ENCODE measurements at regions of chr1 and their contacts with region 1.

Region 1: GRCh38 chr1:9449106-9449627 is 90.1 kb upstream of the SLC25A33 start:
- DNase-seq: peak; percentile 67 to 86
- H3K4me3 ChIP-seq: no peak overlapping the region
- H3K4me3 Mint-ChIP-seq: peak overlapping the region; percentile 60
- H3K27ac Mint-ChIP-seq: peak overlapping the region; percentile 91
- H3K4me1 ChIP-seq: peaks cover 77% of the 10 kb centered on the region
- H3K4me1 Mint-ChIP-seq: peaks cover 47% of the 10 kb centered on the region
- H3K27me3 ChIP-seq: no peaks in the 10 kb centered on the region
- H3K27me3 Mint-ChIP-seq: no peaks in the 10 kb centered on the region
- CTCF ChIP-seq: no peak

Region 2: GRCh38 chr1:9438431-9439073 is 10.6 kb before region 1 on chr1:
- CTCF ChIA-PET with region 1: no interaction called
- POLR2A ChIA-PET with region 1: interaction called, 3 read pairs
- intact Hi-C with region 1: loop called (anchors 1 kb)
- DNase-seq: no peak
- H3K4me3 ChIP-seq: no peak overlapping the region
- H3K4me3 Mint-ChIP-seq: no peak overlapping the region
- H3K27ac Mint-ChIP-seq: peak overlapping the region; percentile 8
- H3K4me1 ChIP-seq: peaks cover 60% of the 10 kb centered on the region
- H3K4me1 Mint-ChIP-seq: peaks cover 34% of the 10 kb centered on the region
- H3K27me3 ChIP-seq: no peaks in the 10 kb centered on the region
- H3K27me3 Mint-ChIP-seq: no peaks in the 10 kb centered on the region
- CTCF ChIP-seq: no peak

Region 3: DNA sequence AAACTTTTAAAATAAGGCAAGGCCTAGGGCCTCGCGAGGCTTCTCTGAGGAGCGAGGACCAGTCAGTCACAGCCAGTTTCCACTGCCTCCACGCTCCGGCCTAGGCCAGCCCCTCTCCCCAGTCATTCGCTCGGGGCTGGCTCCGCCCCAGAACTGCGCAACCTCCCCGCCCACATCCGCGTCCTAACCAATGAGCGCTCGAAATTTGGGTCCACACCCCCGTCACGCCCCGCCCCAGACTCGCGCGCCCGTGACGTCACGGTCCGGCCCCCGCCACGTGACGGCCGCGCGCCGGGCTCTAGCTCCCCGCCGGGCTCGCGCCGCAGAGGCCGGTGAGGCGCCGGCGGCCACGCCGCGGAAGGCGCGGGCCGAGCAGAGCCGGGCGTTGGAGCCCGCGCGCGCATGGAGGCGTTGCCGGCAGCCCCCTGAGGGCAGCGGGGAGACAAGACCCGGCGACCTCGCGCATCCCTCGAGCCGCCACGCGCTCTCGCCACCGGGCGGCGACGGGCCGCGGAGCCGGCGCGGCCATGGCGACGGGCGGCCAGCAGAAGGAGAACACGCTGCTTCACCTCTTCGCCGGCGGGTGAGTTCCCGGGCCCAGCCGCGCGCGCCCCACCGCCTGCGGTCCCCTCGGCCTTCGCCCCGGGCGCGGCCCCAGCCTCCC is 90.1 kb after region 1 on chr1 and contains the start of gene SLC25A33:
- CTCF ChIA-PET with region 1: no interaction called
- POLR2A ChIA-PET with region 1: interaction called, 10 read pairs
- intact Hi-C with region 1: no loop called
- DNase-seq: peak; percentile 97 to 98
- H3K4me3 ChIP-seq: peak within 1 kb of the TSS; percentile 95
- H3K4me3 Mint-ChIP-seq: peak within 1 kb of the TSS; percentile 86
- H3K27ac Mint-ChIP-seq: peak within 1 kb of the TSS; percentile 82
- H3K4me1 ChIP-seq: peaks cover 18% of the 10 kb centered on the region
- H3K4me1 Mint-ChIP-seq: peaks cover 12% of the 10 kb centered on the region
- H3K27me3 ChIP-seq: no peaks in the 10 kb centered on the region
- H3K27me3 Mint-ChIP-seq: no peaks in the 10 kb centered on the region
- CTCF ChIP-seq: no peak
- total RNA-seq, gene SLC25A33: 9.9 and 11.2 TPM in 2 replicates

Region 4: DNA sequence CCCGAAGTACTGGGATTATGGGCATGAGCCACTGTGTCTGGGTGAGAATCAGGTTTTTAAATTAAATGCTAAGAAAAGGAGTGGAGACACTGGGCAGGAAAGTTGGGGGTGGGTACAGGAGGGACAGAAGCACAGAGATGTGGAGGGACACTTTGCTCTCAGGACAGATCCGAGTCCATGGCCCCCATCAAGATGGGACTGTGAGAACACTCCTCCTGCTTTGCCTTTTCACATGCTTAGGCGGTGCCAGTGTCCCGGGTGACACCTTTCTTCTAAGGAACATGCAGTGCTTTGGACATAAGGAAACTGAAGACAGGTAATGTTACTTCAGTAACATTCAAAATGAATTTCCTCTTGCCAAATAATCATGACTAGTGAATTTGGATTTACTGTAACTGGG is 106.8 kb after region 1 on chr1:
- CTCF ChIA-PET with region 1: no interaction called
- POLR2A ChIA-PET with region 1: no interaction called
- intact Hi-C with region 1: no loop called
- DNase-seq: no peak
- H3K4me3 ChIP-seq: no peak overlapping the region
- H3K4me3 Mint-ChIP-seq: no peak overlapping the region
- H3K27ac Mint-ChIP-seq: no peak overlapping the region
- H3K4me1 ChIP-seq: peaks cover 5% of the 10 kb centered on the region; the same call in 1 of the 2 replicates
- H3K4me1 Mint-ChIP-seq: peaks cover 10% of the 10 kb centered on the region
- H3K27me3 ChIP-seq: no peaks in the 10 kb centered on the region
- H3K27me3 Mint-ChIP-seq: no peaks in the 10 kb centered on the region
- CTCF ChIP-seq: no peak

Region 5: DNA sequence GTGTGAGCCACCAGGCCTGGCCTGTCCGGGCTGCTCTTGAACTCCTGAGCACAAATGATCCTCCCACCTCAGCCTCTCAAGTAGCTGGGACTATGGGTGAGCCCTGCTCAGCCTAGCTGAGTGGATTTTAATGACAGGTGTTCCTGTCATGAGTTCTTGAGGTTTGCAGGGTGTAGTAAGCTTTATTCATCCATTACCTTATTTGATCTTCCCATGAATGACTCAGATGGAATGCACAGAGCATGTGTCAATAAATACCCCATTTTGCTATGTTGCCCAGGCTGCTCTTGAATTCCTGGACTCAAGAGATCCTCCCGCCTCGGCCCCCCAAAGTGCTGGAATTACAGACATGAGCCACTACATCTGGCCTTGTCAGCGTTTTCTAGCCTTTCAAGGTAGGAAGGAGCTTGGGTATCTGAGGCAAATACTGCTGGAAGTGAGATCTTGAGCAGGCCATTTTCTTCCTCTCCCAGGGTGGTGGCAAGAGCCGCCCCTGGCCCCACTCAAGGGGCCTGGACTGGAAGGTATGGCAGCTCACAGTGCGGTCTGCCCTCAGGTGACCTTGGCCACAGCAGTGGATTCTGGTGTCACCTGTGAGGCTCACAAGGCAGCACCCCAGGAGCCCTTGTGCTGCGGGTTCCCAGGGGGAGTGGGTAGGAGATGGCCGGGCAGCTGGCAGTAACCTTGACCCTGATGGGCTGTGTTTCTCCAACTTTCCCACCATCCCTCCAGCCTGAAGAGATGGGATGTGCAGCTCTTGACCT is 222.4 kb after region 1 on chr1:
- CTCF ChIA-PET with region 1: no interaction called
- POLR2A ChIA-PET with region 1: no interaction called
- intact Hi-C with region 1: no loop called
- DNase-seq: no peak
- H3K4me3 ChIP-seq: no peak overlapping the region
- H3K4me3 Mint-ChIP-seq: no peak overlapping the region
- H3K27ac Mint-ChIP-seq: no peak overlapping the region
- H3K4me1 ChIP-seq: no peaks in the 10 kb centered on the region
- H3K4me1 Mint-ChIP-seq: no peaks in the 10 kb centered on the region
- H3K27me3 ChIP-seq: no peaks in the 10 kb centered on the region
- H3K27me3 Mint-ChIP-seq: no peaks in the 10 kb centered on the region
- CTCF ChIP-seq: no peak